ENCODE measurements at regions of chr17 and their contacts with region 1.

Region 1: GRCh38 chr17:19464031-19465026 is 53.3 kb downstream of the RNF112 start:
- DNase-seq: peak; percentile 43
- H3K4me3 ChIP-seq: peak overlapping the region; percentile 44
- H3K27ac ChIP-seq: peak overlapping the region; percentile 92
- H3K4me1 ChIP-seq: peaks cover 79% of the 10 kb centered on the region
- CTCF ChIP-seq: no peak

Region 2: GRCh38 chr17:19306160-19307111 is 157.9 kb before region 1 on chr17:
- CTCF ChIA-PET with region 1: no interaction called
- POLR2A ChIA-PET with region 1: no interaction called
- intact Hi-C with region 1: loop called (anchors 5 kb)
- DNase-seq: peak; percentile 98
- H3K4me3 ChIP-seq: peak overlapping the region; percentile 49
- H3K27ac ChIP-seq: peak overlapping the region; percentile 84
- H3K4me1 ChIP-seq: peaks cover 92% of the 10 kb centered on the region
- CTCF ChIP-seq: no peak

Region 3: GRCh38 chr17:19377602-19378392 is 86.5 kb before region 1 on chr17:
- CTCF ChIA-PET with region 1: no interaction called
- POLR2A ChIA-PET with region 1: interaction called, 8 read pairs
- intact Hi-C with region 1: loop called (anchors 5 kb)
- DNase-seq: peak; percentile 98
- H3K4me3 ChIP-seq: peak overlapping the region; percentile 84
- H3K27ac ChIP-seq: peak overlapping the region; percentile 70
- H3K4me1 ChIP-seq: peaks cover 22% of the 10 kb centered on the region
- CTCF ChIP-seq: no peak

Region 4: DNA sequence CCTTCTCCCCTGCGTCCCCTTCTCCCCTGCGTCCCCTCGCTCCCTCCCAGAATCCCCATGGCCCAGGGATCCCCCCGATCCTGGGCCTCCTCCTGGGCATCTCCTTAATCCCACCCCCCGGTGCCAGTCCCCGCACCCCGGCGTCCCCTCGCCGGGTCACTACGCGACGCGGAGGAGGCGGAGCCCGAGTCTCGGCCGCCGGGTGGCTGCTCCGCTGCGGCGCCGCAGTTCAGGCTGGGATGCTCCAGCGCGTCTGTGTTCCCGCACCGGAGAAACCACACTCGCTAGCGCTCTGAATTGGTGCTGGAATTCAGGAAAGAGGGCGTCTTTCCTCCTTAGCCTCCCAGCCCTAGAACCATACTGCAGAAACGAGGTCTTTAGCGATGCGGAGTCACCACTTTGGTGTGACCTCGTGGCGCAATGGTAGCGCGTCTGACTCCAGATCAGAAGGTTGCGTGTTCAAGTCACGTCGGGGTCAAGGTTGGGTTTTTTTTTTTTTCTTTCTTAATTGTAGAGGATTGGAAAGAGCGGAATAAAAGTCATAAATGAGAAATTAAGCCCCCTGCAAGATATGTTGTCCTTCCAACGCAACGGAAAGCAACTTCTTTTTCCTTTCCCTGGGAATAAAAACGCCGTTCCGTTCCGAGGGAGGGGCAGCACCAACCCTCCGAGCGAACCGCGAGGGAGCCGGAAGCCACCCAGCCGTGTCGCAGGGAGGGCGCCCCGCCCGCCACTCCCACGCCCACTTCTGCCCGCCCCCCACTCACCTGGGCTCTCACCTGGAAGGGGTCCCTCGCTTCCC is 43.6 kb after region 1 on chr17:
- CTCF ChIA-PET with region 1: no interaction called
- POLR2A ChIA-PET with region 1: no interaction called
- intact Hi-C with region 1: loop called (anchors 1 kb)
- DNase-seq: peak; percentile 76
- H3K4me3 ChIP-seq: peak overlapping the region; percentile 82
- H3K27ac ChIP-seq: peak overlapping the region; percentile 68
- H3K4me1 ChIP-seq: peaks cover 37% of the 10 kb centered on the region
- CTCF ChIP-seq: no peak

Measured in OCI-LY7 (cell line).